Dorsolateral prefrontal cortex (tissue), 120 donors: ENCODE measurements at regions of chr4 and their contacts with region 1.

Region 1: DNA sequence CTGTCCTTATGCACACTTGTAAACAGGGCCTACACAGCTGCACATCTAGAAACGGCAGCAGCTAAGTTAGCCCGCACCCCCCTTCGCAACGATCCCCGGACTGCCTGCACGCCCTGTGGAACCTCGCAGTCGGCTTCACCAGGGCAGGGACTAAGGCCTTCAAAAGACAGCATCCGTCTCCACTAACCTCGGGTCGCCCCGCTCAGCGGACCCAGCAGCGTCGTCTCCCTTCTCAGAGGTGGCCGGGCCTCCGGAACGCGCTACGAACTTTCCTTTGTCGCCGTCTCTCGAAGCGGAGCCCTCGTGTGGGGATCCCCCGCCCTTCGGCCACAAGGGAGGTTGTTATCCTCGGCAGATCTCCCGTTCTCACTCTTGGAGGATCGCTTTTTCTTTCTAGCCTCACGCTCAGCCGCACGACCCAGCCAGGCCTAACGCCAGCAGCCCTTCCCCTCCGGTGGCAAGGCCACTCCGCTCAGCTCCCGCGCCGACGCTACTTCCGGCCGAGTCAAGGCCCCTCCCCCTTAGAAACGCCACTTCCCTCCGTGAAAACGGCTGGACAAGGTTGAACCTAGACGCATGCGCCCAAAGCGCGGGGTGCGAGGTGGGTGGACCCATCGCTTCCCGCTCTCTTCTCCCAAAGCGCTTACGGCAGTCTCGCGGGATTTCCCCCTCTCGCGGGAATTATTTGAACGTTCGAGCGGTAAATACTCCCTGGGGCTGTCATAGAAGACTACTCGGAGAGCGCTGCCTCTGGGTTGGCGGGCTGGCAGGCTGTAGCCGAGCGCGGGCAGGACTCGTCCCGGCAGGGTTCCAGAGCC is at the starts of genes DCAF16 and NCAPG:
- DNase-seq: peak; percentile 99 to 100 (median 100)
- H3K4me3 ChIP-seq: peak within 1 kb of the TSS; percentile 56 to 98 (median 90)
- H3K27ac ChIP-seq: peak within 1 kb of the TSS; percentile 23 to 96 (median 90)
- H3K27me3 ChIP-seq: no peaks in the 10 kb centered on the region
- CTCF ChIP-seq: peak in 33 of 56 donors; percentile 2 to 62 (median 32)
- total RNA-seq, gene DCAF16: 24.8 to 77.9 (median 45.8) TPM
- total RNA-seq, gene NCAPG: 0.12 to 1.8 (median 0.44) TPM in 73 of 120 experiments, not detected in the others

Region 2: GRCh38 chr4:17544205-17544604 is 266.3 kb before region 1 on chr4:
- intact Hi-C with region 1: loop called in 1 of 2 experiments (anchors 2 kb)
- DNase-seq: peak; percentile 23 to 94 (median 87)
- H3K4me3 ChIP-seq: peak overlapping the region in 2 of 59 donors; percentile 18 to 21
- H3K27ac ChIP-seq: peak overlapping the region; percentile 66 to 100 (median 95)
- H3K27me3 ChIP-seq: no peaks in the 10 kb centered on the region
- CTCF ChIP-seq: peak in 4 of 56 donors; percentile 6 to 23 (median 20)

Region 3: GRCh38 chr4:17552427-17552826 is 258.0 kb before region 1 on chr4:
- intact Hi-C with region 1: loop called (anchors 2 to 10 kb)
- DNase-seq: no peak
- H3K4me3 ChIP-seq: no peak overlapping the region
- H3K27ac ChIP-seq: peak overlapping the region in 19 of 59 donors; percentile 6 to 98 (median 47)
- H3K27me3 ChIP-seq: no peaks in the 10 kb centered on the region
- CTCF ChIP-seq: no peak

Region 4: GRCh38 chr4:17614416-17615299 is 195.8 kb before region 1 on chr4 and contains the start of gene MED28:
- intact Hi-C with region 1: loop called in 1 of 2 experiments (anchors 10 kb)
- DNase-seq: peak; percentile 91 to 96 (median 94)
- H3K4me3 ChIP-seq: peak within 1 kb of the TSS; percentile 72 to 100 (median 95)
- H3K27ac ChIP-seq: peak within 1 kb of the TSS; percentile 27 to 98 (median 86)
- H3K27me3 ChIP-seq: no peaks in the 10 kb centered on the region
- CTCF ChIP-seq: peak in 54 of 56 donors; percentile 13 to 66 (median 44)
- total RNA-seq, gene MED28: 42.6 to 89.2 (median 58.0) TPM

Region 5: GRCh38 chr4:17736484-17736883 is 74.0 kb before region 1 on chr4:
- intact Hi-C with region 1: no loop called
- DNase-seq: no peak
- H3K4me3 ChIP-seq: no peak overlapping the region
- H3K27ac ChIP-seq: no peak overlapping the region
- H3K27me3 ChIP-seq: no peaks in the 10 kb centered on the region
- CTCF ChIP-seq: no peak

Region 6: DNA sequence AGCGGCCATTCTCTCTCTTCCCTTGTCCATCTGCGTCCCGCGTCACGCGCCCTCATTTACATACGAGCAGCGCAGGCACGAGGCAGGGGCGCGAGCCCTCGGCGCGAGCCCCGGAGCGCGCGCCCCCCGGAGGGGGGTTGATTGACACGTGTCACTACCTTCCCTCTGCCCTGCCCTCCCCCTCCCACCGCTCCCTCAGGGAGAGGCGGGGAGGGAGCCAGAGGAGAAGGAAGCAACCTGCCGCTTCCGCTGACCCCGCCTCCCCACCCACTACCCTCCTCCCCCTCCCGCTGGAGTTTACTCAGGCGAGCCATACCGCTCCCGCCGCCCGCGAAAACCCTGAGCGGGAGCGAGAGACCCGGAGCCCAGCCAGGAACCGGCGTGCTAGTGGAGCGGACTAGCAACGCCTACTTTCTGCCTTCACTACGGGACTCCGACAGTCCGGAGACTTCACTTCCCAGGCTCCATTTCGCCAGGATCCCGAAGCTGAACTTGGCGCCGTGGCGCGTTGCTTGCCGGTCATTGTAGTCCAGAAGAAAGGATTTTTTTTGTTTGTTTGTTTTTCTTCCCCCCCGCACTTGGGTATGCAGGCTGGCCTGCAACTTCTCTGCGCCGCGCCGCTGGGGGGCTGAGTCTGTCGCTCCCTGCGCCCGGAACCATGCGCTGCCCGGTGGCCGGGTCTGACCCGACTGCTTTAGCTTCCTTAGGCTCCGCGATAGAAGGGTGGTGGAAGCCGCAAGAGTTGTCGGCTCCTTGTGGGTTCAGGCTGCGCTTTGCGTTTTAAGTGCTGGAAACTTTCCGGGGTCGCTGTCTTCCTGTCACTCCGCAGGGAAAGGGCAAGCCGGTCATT is 211.5 kb after region 1 on chr4 and contains the start of gene LCORL:
- intact Hi-C with region 1: loop called (anchors 2 kb)
- DNase-seq: peak; percentile 82 to 97 (median 94)
- H3K4me3 ChIP-seq: peak within 1 kb of the TSS; percentile 68 to 99 (median 93)
- H3K27ac ChIP-seq: peak within 1 kb of the TSS; percentile 66 to 98 (median 94)
- H3K27me3 ChIP-seq: no peaks in the 10 kb centered on the region
- CTCF ChIP-seq: peak in 25 of 56 donors; percentile 5 to 46 (median 26)
- total RNA-seq, gene LCORL: 8.6 to 31.3 (median 18.1) TPM